ENCODE measurements at regions of chr12 and their contacts with region 1.

Region 1: GRCh38 chr12:89352492-89353187 is at the start of gene DUSP6:
- DNase-seq: peak; percentile 86 to 95 (median 90)
- H3K4me3 ChIP-seq: peak within 1 kb of the TSS; percentile 70 to 83
- H3K4me3 Mint-ChIP-seq: peak within 1 kb of the TSS; percentile 87 to 98 (median 92)
- H3K27ac ChIP-seq: peak within 1 kb of the TSS; percentile 68
- H3K27ac Mint-ChIP-seq: peak within 1 kb of the TSS; percentile 86 to 95 (median 92)
- H3K4me1 ChIP-seq: peaks cover 48% of the 10 kb centered on the region
- H3K4me1 Mint-ChIP-seq: peaks cover 27 to 56% (median 40%) of the 10 kb centered on the region in 4 donors
- H3K27me3 ChIP-seq: no peaks in the 10 kb centered on the region
- H3K27me3 Mint-ChIP-seq: no peaks in the 10 kb centered on the region
- total RNA-seq, gene DUSP6: 0.90 to 1.9 TPM

Region 2: GRCh38 chr12:89051065-89051677 is 301.5 kb before region 1 on chr12:
- CTCF ChIA-PET with region 1: no interaction called
- POLR2A ChIA-PET with region 1: no interaction called
- intact Hi-C with region 1: loop called (anchors 2 kb)
- DNase-seq: peak; percentile 35 to 60 (median 51)
- H3K4me3 ChIP-seq: no peak overlapping the region
- H3K4me3 Mint-ChIP-seq: no peak overlapping the region
- H3K27ac ChIP-seq: no peak overlapping the region
- H3K27ac Mint-ChIP-seq: no peak overlapping the region
- H3K4me1 ChIP-seq: no peaks in the 10 kb centered on the region
- H3K4me1 Mint-ChIP-seq: peaks cover 0 to 3% (median 1%) of the 10 kb centered on the region in 4 donors
- H3K27me3 ChIP-seq: no peaks in the 10 kb centered on the region
- H3K27me3 Mint-ChIP-seq: peaks cover 0 to 1% of the 10 kb centered on the region in 2 donors

Region 3: DNA sequence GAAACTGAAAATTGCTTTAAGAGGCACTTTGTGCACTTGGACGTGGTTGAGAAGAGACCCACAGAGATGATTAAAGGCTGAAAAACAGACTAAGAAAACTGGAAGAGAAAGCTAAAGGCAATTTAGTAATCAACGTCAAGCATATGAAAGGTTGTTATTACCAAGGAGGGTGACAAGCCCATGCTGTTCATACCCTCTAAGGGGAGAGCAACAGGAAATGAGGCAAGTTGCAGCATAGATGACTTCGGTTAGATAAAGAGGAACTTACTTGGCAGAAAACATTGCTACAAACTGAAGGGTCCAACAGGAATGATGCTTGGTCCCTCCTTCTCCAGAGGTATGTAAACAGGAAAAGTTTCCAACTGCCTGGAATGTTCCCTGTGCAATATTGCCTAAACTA is 108.1 kb before region 1 on chr12:
- CTCF ChIA-PET with region 1: interaction called, 10 read pairs
- POLR2A ChIA-PET with region 1: interaction called, 16 read pairs
- intact Hi-C with region 1: no loop called
- DNase-seq: peak; percentile 28 to 59 (median 49)
- H3K4me3 ChIP-seq: peak overlapping the region in 1 of 2 donors; percentile 21
- H3K4me3 Mint-ChIP-seq: peak overlapping the region; percentile 6 to 70 (median 50)
- H3K27ac ChIP-seq: no peak overlapping the region
- H3K27ac Mint-ChIP-seq: peak overlapping the region; percentile 13 to 73 (median 57)
- H3K4me1 ChIP-seq: peaks cover 30% of the 10 kb centered on the region
- H3K4me1 Mint-ChIP-seq: peaks cover 31 to 34% (median 33%) of the 10 kb centered on the region in 4 donors
- H3K27me3 ChIP-seq: no peaks in the 10 kb centered on the region
- H3K27me3 Mint-ChIP-seq: no peaks in the 10 kb centered on the region

Region 4: DNA sequence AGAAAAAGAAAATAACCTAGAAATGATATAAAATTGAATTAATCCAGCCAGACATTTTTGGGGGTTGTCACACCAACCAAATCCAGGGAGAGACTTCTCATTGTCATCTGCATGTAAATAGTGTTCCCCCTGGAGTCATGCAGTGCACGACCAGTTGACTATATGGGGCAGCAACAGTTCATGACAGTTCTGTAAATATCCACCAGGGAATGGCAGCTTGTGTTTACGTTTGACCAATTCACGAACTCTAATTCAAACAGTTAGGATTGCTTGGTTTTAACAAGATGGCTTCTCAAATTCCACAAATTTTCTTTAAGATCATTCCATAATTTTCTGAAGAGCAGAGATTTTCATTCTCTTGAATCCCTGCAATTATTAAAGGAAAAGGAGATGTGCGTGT is 43.1 kb after region 1 on chr12:
- CTCF ChIA-PET with region 1: no interaction called
- POLR2A ChIA-PET with region 1: interaction called, 3 read pairs
- intact Hi-C with region 1: loop called (anchors 5 kb)
- DNase-seq: no peak
- H3K4me3 ChIP-seq: no peak overlapping the region
- H3K4me3 Mint-ChIP-seq: peak overlapping the region in 1 of 8 donors; percentile 8
- H3K27ac ChIP-seq: no peak overlapping the region
- H3K27ac Mint-ChIP-seq: peak overlapping the region in 3 of 7 donors; percentile 37 to 87 (median 52)
- H3K4me1 ChIP-seq: peaks cover 14% of the 10 kb centered on the region
- H3K4me1 Mint-ChIP-seq: peaks cover 10 to 32% (median 15%) of the 10 kb centered on the region in 4 donors
- H3K27me3 ChIP-seq: no peaks in the 10 kb centered on the region
- H3K27me3 Mint-ChIP-seq: no peaks in the 10 kb centered on the region

Region 5: DNA sequence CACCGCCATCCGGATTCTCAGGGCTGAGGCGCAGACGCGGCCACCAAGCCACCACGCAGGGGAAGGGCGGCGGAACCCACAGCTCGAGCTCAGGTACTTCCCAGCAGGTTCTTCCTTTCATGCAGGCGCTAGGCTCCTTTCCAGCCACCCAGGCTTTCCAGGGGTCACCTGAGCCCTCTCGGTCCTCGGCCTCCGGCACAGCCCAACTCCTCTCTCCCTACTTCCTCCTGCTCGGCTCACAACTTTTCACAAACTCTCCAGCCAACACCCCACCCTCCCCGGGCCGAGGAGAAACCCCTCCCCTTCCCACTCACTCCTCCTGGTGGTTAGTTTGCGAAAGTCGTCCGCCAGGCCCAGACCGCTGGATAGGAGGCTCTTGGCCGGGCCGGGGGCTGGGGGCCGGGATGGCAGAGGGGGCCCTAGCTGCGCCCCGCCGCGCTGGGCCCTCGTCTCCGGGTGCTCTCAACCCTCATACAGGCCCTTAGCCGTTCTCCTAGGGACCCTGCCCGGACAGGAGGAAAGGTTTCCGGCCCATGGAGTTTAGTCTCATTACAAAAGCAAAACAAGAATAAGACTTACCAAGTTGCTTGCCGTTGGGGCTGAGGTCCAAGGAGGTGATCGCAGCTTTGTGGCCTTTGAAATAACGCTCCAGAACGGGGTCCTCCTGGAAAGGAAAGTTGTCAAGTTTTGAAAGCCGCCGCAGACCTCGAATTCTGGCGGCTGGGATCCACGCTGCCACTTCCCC is 172.1 kb after region 1 on chr12 and contains the start of gene GALNT4:
- CTCF ChIA-PET with region 1: interaction called, 7 read pairs
- POLR2A ChIA-PET with region 1: interaction called, 15 read pairs
- intact Hi-C with region 1: loop called (anchors 1 kb)
- DNase-seq: peak; percentile 78 to 86 (median 80)
- H3K4me3 ChIP-seq: peak within 1 kb of the TSS; percentile 72 to 93
- H3K4me3 Mint-ChIP-seq: peak within 1 kb of the TSS; percentile 95 to 98 (median 98)
- H3K27ac ChIP-seq: peak within 1 kb of the TSS; percentile 87
- H3K27ac Mint-ChIP-seq: peak within 1 kb of the TSS; percentile 83 to 96 (median 95)
- H3K4me1 ChIP-seq: peaks cover 49% of the 10 kb centered on the region
- H3K4me1 Mint-ChIP-seq: peaks cover 34 to 57% (median 44%) of the 10 kb centered on the region in 4 donors
- H3K27me3 ChIP-seq: no peaks in the 10 kb centered on the region
- H3K27me3 Mint-ChIP-seq: no peaks in the 10 kb centered on the region
- total RNA-seq, gene GALNT4: 7.2 to 7.6 TPM

Region 6: GRCh38 chr12:89949457-89950195 is 597.0 kb after region 1 on chr12:
- CTCF ChIA-PET with region 1: no interaction called
- POLR2A ChIA-PET with region 1: no interaction called
- intact Hi-C with region 1: loop called (anchors 2 kb)
- DNase-seq: peak; percentile 87 to 94 (median 90)
- H3K4me3 ChIP-seq: no peak overlapping the region
- H3K4me3 Mint-ChIP-seq: peak overlapping the region; percentile 11 to 77 (median 59)
- H3K27ac ChIP-seq: peak overlapping the region; percentile 83
- H3K27ac Mint-ChIP-seq: peak overlapping the region; percentile 74 to 98 (median 93)
- H3K4me1 ChIP-seq: peaks cover 53% of the 10 kb centered on the region
- H3K4me1 Mint-ChIP-seq: peaks cover 49 to 64% (median 58%) of the 10 kb centered on the region in 4 donors
- H3K27me3 ChIP-seq: no peaks in the 10 kb centered on the region
- H3K27me3 Mint-ChIP-seq: no peaks in the 10 kb centered on the region

Measured in CD4-positive, alpha-beta memory T cell (primary cell).